ENCODE measurements at regions of chr12 and their contacts with region 1.

Region 1: DNA sequence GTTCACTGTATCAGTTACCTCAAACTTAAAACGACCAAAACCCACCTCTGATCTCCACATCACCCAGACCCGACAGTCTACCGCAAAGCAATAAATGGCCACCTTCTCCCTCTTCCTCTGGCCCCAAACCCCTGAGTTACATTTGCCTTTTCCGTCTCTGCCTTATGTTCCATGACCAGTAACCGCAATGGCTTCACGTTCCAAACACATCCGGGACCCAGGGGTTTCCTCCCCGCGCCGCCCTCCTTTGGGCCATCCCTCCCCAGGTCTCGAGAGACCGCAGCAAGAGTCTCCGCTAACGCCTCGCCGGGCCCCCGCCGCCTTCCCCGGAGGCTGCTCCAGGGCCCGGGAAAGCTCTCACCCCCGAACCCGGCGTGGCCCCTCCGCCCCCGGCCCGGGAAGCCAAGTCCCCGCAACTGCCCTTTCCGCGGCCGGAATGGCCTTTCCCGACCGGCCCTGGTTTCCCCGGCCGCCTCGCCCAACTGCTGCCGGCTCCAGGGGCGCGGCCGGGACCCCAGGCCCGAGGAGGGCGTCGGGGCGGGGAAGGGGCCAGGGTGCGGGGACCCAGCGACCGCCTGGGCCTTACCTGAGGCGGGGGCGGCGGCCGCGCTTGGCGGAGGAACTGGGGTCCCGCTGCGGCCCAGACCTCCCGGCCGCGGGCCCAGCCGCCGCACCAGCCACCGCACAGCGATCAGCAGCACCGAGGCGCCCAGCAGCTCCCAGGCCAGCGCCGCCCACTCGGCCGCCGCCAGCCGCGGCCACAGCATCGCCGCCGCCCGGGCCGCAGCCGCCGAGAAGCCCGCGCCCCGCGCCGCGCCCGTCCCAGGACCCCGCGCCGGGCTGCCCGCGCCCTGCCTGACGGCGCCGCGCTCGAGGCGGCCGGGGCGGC is at the start of gene ANKLE2:
- DNase-seq: no peak
- ATAC-seq: peak; percentile 65
- H3K4me3 ChIP-seq: peak within 1 kb of the TSS; percentile 81 to 88
- H3K27ac ChIP-seq: peak within 1 kb of the TSS; percentile 99
- H3K4me1 ChIP-seq: peaks cover 8 to 13% of the 10 kb centered on the region in 2 experiments
- H3K27me3 ChIP-seq: no peaks in the 10 kb centered on the region
- CTCF ChIP-seq: no peak
- POLR2A ChIP-seq: no peak
- RAD21 ChIP-seq: no peak
- total RNA-seq, gene ANKLE2: 68.8 TPM

Region 2: DNA sequence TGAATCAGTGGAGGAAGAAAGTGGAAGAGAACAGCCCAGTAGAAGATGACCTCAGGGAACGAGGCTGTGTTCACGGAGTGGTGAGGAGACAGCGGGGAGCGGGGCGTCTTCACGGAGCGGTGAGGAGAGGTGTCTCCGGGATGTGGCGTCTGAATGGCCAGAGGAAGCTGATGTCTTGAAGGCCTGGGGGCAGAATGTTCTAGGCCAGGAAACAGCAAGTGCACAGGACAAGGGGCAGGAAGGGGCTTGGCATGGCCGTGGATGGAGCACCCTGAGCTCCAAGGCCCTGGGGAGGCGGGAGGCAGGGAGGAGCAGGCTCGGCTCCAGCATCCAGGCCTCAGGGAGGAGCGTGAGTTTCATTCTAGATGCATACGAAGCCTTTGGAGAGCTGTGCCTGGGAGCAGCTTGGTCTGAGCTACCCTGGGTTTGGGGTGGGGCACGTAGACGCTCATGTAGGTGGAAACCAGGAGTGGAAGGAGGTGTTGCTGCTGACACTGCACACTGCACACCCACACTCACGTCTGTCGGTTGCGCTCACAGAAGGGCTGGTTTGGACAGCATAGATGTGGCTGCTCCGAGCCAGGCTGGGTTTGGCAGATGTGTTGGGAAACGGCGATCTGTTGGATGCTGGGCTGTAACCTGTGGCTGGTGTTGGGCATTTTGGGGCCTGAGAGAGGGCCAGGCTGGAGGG is 1676.0 kb before region 1 on chr12:
- CTCF ChIA-PET with region 1: no interaction called
- POLR2A ChIA-PET with region 1: no interaction called
- RAD21 ChIA-PET with region 1: no interaction called
- intact Hi-C with region 1: no loop called
- DNase-seq: no peak
- ATAC-seq: no peak
- H3K4me3 ChIP-seq: no peak overlapping the region
- H3K27ac ChIP-seq: no peak overlapping the region
- H3K4me1 ChIP-seq: no peaks in the 10 kb centered on the region
- H3K27me3 ChIP-seq: peaks cover 3% of the 10 kb centered on the region; the same call in 1 of the 2 replicates
- CTCF ChIP-seq: no peak
- POLR2A ChIP-seq: no peak
- RAD21 ChIP-seq: no peak

Region 3: GRCh38 chr12:132828706-132829534 is 67.6 kb after region 1 on chr12 and contains the start of gene GOLGA3:
- CTCF ChIA-PET with region 1: no interaction called
- POLR2A ChIA-PET with region 1: no interaction called
- RAD21 ChIA-PET with region 1: no interaction called
- intact Hi-C with region 1: loop called (anchors 10 kb)
- DNase-seq: peak; percentile 94
- ATAC-seq: peak; percentile 94
- H3K4me3 ChIP-seq: peak within 1 kb of the TSS; percentile 98 to 99
- H3K27ac ChIP-seq: peak within 1 kb of the TSS; percentile 90
- H3K4me1 ChIP-seq: peaks cover 9 to 15% of the 10 kb centered on the region in 2 experiments; a peak in 3 of 4 replicates
- H3K27me3 ChIP-seq: no peaks in the 10 kb centered on the region
- CTCF ChIP-seq: no peak
- POLR2A ChIP-seq: peak; percentile 27
- RAD21 ChIP-seq: no peak
- total RNA-seq, gene GOLGA3: 35.1 TPM